A549 (cell line): ENCODE measurements at regions of chr1 and their contacts with region 1.

Region 1: DNA sequence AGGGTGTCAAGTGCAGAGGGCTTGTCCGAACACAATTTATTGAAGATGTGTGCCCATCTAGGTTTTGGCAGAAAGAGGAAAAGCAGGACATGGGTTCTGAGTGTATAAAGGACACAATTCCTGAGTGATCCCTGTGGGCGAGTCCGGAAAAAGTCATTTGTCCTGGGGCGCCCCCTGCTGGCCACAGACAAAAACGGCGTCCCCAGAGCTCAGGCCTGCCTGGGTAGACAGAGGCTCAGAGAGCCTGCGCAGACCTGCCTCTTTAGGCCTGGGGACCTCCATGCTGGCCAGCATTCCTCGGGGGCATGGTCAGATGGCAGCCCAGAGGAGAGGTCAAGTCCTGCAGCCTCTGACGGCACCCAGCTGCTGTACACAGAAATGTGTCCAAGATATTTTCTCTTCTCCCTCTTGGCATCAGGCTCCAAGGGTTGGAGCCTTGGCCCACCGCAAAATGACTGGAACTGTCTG is 65.5 kb upstream of the LRP8 start:
- DNase-seq: peak; percentile 61 to 76
- ATAC-seq: peak; percentile 87 to 96
- H3K4me3 ChIP-seq: no peak overlapping the region
- H3K27ac ChIP-seq: peak overlapping the region in 1 of 2 experiments; percentile 62; a peak in 2 of 6 replicates
- H3K4me1 ChIP-seq: no peaks in the 10 kb centered on the region
- CTCF ChIP-seq: peak; percentile 74
- EP300 ChIP-seq: no peak
- POLR2A ChIP-seq: no peak
- RAD21 ChIP-seq: peak; percentile 82 to 89

Region 2: DNA sequence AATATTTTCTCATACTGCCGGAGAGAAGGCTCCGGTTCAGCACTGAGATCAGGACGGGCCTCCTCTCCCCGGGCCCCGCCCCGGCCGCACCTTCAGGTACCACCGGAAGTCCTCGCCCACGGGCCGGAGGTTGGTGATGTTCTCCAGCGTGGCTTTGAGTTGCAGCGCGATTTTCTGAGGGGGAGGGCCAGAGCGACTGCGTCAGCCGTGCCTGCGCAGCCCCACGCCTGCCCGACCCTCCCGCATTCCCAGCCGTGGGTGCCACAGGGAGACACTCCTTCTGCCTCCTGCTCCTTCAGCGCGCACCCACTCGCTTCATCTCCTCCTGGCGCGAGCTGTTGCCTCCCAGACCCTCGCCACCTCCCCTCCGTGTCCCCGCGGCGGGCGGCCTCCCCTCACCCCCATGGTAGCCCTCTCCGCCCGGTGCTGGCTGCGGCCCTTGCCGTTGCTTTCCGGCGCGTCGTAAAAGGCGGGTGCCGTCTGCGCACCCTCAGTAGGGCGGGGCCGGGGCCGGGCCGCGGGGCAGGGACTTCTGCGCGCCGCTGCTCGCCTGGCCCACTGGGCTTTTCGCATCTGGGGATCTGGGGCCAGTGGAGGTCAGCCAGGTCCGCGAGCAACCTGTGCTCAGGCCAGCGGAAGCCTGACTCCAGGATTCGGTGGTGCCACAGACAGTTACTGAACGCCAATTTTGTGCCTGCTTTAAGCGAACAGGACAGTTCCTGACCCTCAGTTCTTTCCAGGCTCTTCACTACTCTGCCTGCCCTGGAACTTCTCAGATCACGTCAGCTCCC is 173.0 kb before region 1 on chr1 and contains the start of gene CZIB:
- CTCF ChIA-PET with region 1: no interaction called
- POLR2A ChIA-PET with region 1: no interaction called
- DNase-seq: peak; percentile 73 to 92
- ATAC-seq: peak; percentile 95
- H3K4me3 ChIP-seq: peak within 1 kb of the TSS; percentile 64
- H3K27ac ChIP-seq: peak within 1 kb of the TSS; percentile 88 to 99
- H3K4me1 ChIP-seq: peaks cover 11% of the 10 kb centered on the region; the same call in 2 of the 3 replicates
- CTCF ChIP-seq: no peak
- EP300 ChIP-seq: no peak
- POLR2A ChIP-seq: peak; percentile 72
- RAD21 ChIP-seq: no peak
- polyA plus RNA-seq, gene CZIB: 60.1 and 66.2 TPM in 2 replicates

Region 3: GRCh38 chr1:53278201-53278725 is 115.1 kb before region 1 on chr1:
- CTCF ChIA-PET with region 1: interaction called, 244 read pairs
- POLR2A ChIA-PET with region 1: no interaction called
- DNase-seq: peak; percentile 17 to 65
- ATAC-seq: peak; percentile 70 to 79; a peak in 5 of 6 replicates
- H3K4me3 ChIP-seq: no peak overlapping the region
- H3K27ac ChIP-seq: no peak overlapping the region
- H3K4me1 ChIP-seq: no peaks in the 10 kb centered on the region
- CTCF ChIP-seq: peak; percentile 76
- EP300 ChIP-seq: no peak
- POLR2A ChIP-seq: no peak
- RAD21 ChIP-seq: peak; percentile 73 to 81

Region 4: GRCh38 chr1:53303726-53304515 is 89.4 kb before region 1 on chr1:
- CTCF ChIA-PET with region 1: interaction called, 11 read pairs
- POLR2A ChIA-PET with region 1: no interaction called
- DNase-seq: no peak
- ATAC-seq: no peak
- H3K4me3 ChIP-seq: no peak overlapping the region
- H3K27ac ChIP-seq: no peak overlapping the region
- H3K4me1 ChIP-seq: no peaks in the 10 kb centered on the region
- CTCF ChIP-seq: no peak
- EP300 ChIP-seq: no peak
- POLR2A ChIP-seq: no peak
- RAD21 ChIP-seq: no peak

Region 5: DNA sequence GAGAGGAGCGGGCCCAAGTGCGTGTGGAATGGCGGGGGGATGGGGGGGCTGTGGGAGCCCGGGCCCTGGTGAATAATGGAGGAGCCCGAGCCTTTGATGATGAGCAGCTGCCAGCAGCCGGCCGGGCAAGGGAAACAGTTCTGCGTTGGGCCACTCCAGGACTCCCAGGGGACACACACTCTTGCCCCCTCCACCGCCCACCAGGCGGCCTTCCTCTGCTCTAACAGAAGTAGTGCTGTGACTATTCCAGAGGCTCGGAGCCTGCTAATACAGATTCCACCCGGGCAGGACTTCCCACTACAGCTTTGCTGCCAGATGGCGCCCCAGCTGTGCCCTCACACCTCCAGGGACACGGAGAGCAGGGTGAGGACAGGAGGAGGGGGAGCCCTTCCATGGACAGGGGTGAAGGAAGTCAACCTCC is 17.3 kb before region 1 on chr1:
- CTCF ChIA-PET with region 1: interaction called, 37 read pairs
- POLR2A ChIA-PET with region 1: no interaction called
- DNase-seq: no peak
- ATAC-seq: 0 out of 6 replicates have a peak, but pooled peaks of 1 of the 2 experiments have one; percentile 29
- H3K4me3 ChIP-seq: no peak overlapping the region
- H3K27ac ChIP-seq: no peak overlapping the region
- H3K4me1 ChIP-seq: no peaks in the 10 kb centered on the region
- CTCF ChIP-seq: no peak
- EP300 ChIP-seq: no peak
- POLR2A ChIP-seq: no peak
- RAD21 ChIP-seq: no peak

Region 6: GRCh38 chr1:53410100-53410541 is 16.8 kb after region 1 on chr1:
- CTCF ChIA-PET with region 1: interaction called, 54 read pairs
- POLR2A ChIA-PET with region 1: no interaction called
- DNase-seq: no peak
- ATAC-seq: no peak
- H3K4me3 ChIP-seq: no peak overlapping the region
- H3K27ac ChIP-seq: no peak overlapping the region
- H3K4me1 ChIP-seq: peaks cover 30% of the 10 kb centered on the region
- CTCF ChIP-seq: no peak
- EP300 ChIP-seq: no peak
- POLR2A ChIP-seq: no peak
- RAD21 ChIP-seq: no peak